Heart right ventricle (tissue), 16 donors: ENCODE measurements at regions of chr9 and their contacts with region 1.

Region 1: DNA sequence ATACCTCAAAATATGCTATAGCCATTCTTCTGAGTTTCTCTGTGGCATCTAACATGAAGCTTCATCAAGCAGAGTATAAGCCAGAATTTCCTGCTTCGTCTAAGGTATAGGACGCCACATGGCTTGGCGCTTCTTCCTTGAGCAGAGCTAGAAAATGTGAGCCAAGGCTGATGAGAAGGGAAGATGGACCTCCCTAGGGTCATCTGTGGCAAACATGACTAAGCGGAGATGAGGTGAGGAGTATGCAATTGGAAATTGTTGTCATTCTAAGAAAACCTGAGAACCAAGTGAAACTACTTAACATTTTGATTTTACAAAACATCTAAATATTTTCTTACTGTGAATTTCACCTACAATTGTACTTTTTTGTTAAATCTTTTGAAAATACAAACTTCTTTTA is 466.5 kb downstream of the PSAT1 start:
- DNase-seq: no peak
- ATAC-seq: no peak
- H3K4me3 ChIP-seq: no peak overlapping the region
- H3K27ac ChIP-seq: no peak overlapping the region
- H3K4me1 ChIP-seq: no peaks in the 10 kb centered on the region
- H3K27me3 ChIP-seq: no peaks in the 10 kb centered on the region
- CTCF ChIP-seq: no peak

Region 2: DNA sequence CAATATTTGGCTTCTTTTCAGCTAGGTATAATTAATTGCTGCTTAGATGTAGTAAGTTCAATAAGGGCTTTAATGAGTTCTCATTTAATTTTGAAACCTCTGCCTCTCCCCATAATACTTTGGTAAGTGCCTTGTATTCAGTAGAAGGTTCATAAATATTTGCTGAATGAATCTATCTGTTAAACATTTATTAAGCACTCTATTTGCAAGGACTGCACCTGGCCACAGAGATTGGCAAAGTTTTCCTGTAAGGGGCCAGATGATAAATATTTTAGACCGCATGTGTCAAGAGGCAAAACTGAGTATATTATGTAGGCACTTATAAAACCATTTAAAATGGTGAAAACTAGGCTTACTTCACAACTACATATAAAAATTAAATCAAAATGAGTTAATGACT is 1096.3 kb before region 1 on chr9:
- intact Hi-C with region 1: loop called in 1 of 10 experiments (anchors 5 kb)
- DNase-seq: no peak
- ATAC-seq: no peak
- H3K4me3 ChIP-seq: no peak overlapping the region
- H3K27ac ChIP-seq: no peak overlapping the region
- H3K4me1 ChIP-seq: peaks cover 0 to 14% (median 3%) of the 10 kb centered on the region in 9 donors
- H3K27me3 ChIP-seq: no peaks in the 10 kb centered on the region
- CTCF ChIP-seq: no peak

Region 3: GRCh38 chr9:78746010-78746409 is 17.4 kb before region 1 on chr9:
- intact Hi-C with region 1: no loop called
- DNase-seq: no peak
- ATAC-seq: no peak
- H3K4me3 ChIP-seq: no peak overlapping the region
- H3K27ac ChIP-seq: no peak overlapping the region
- H3K4me1 ChIP-seq: no peaks in the 10 kb centered on the region
- H3K27me3 ChIP-seq: no peaks in the 10 kb centered on the region
- CTCF ChIP-seq: no peak